CD8-positive, alpha-beta T cell (primary cell): ENCODE measurements at regions of chr20 and their contacts with region 1.

Region 1: GRCh38 chr20:44651684-44652423 is at the start of gene ADA:
- DNase-seq: peak in 8 of 9 experiments; percentile 19 to 75 (median 55)
- ATAC-seq: peak; percentile 66
- H3K4me3 ChIP-seq: peak within 1 kb of the TSS; percentile 87 to 97
- H3K4me3 Mint-ChIP-seq: peak within 1 kb of the TSS; percentile 88
- H3K27ac ChIP-seq: peak within 1 kb of the TSS; percentile 70 to 75
- H3K27ac Mint-ChIP-seq: peak within 1 kb of the TSS; percentile 91
- H3K4me1 ChIP-seq: peaks cover 47% of the 10 kb centered on the region
- H3K4me1 Mint-ChIP-seq: peaks cover 46% of the 10 kb centered on the region
- H3K27me3 ChIP-seq: no peaks in the 10 kb centered on the region
- H3K27me3 Mint-ChIP-seq: no peaks in the 10 kb centered on the region
- CTCF ChIP-seq: no peak
- total RNA-seq, gene ADA: 27.9 to 30.2 TPM

Region 2: DNA sequence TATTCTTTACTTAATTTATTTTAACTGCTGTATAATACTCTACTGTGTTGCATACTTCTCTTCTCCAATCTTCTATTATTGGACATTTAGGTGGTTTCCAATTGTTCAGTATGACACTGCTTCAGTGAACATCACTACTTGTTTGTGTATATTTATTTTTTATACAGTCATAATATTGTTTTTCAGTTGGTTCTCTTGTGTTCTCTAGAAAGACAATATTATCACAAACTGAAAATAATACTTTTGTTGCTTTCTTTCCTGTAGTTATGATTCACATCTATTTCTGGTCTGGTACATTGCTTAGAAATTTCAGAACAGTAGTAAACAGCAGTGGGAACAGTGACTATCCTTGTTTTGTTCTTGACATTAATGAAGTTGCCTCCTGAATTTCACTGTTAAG is 862.3 kb before region 1 on chr20:
- CTCF ChIA-PET with region 1: no interaction called
- POLR2A ChIA-PET with region 1: no interaction called
- intact Hi-C with region 1: no loop called
- DNase-seq: no peak
- ATAC-seq: no peak
- H3K4me3 ChIP-seq: no peak overlapping the region
- H3K4me3 Mint-ChIP-seq: no peak overlapping the region
- H3K27ac ChIP-seq: no peak overlapping the region
- H3K27ac Mint-ChIP-seq: no peak overlapping the region
- H3K4me1 ChIP-seq: no peaks in the 10 kb centered on the region
- H3K4me1 Mint-ChIP-seq: no peaks in the 10 kb centered on the region
- H3K27me3 ChIP-seq: no peaks in the 10 kb centered on the region
- H3K27me3 Mint-ChIP-seq: peaks cover 6% of the 10 kb centered on the region
- CTCF ChIP-seq: no peak

Region 3: GRCh38 chr20:44475694-44476560 is 175.9 kb before region 1 on chr20 and contains the start of gene TTPAL:
- CTCF ChIA-PET with region 1: no interaction called
- POLR2A ChIA-PET with region 1: no interaction called
- intact Hi-C with region 1: loop called in 1 of 2 experiments (anchors 1 kb)
- DNase-seq: peak; percentile 72 to 95 (median 88)
- ATAC-seq: peak; percentile 96
- H3K4me3 ChIP-seq: peak within 1 kb of the TSS; percentile 82 to 90
- H3K4me3 Mint-ChIP-seq: peak within 1 kb of the TSS; percentile 86
- H3K27ac ChIP-seq: peak within 1 kb of the TSS; percentile 94 to 96
- H3K27ac Mint-ChIP-seq: peak within 1 kb of the TSS; percentile 95
- H3K4me1 ChIP-seq: peaks cover 16% of the 10 kb centered on the region
- H3K4me1 Mint-ChIP-seq: peaks cover 27% of the 10 kb centered on the region
- H3K27me3 ChIP-seq: no peaks in the 10 kb centered on the region
- H3K27me3 Mint-ChIP-seq: no peaks in the 10 kb centered on the region
- CTCF ChIP-seq: peak; percentile 26
- total RNA-seq, gene TTPAL: 12.3 TPM

Region 4: GRCh38 chr20:44615169-44615791 is 36.6 kb before region 1 on chr20:
- CTCF ChIA-PET with region 1: interaction called, 27 read pairs
- POLR2A ChIA-PET with region 1: interaction called, 9 read pairs
- intact Hi-C with region 1: loop called in 1 of 2 experiments (anchors 1 kb)
- DNase-seq: peak in 5 of 9 experiments; percentile 22 to 61 (median 31)
- ATAC-seq: no peak
- H3K4me3 ChIP-seq: peak overlapping the region in 1 of 2 experiments; percentile 2
- H3K4me3 Mint-ChIP-seq: peak overlapping the region; percentile 61
- H3K27ac ChIP-seq: peak overlapping the region; percentile 53 to 75
- H3K27ac Mint-ChIP-seq: peak overlapping the region; percentile 98
- H3K4me1 ChIP-seq: peaks cover 82% of the 10 kb centered on the region
- H3K4me1 Mint-ChIP-seq: peaks cover 76% of the 10 kb centered on the region
- H3K27me3 ChIP-seq: no peaks in the 10 kb centered on the region
- H3K27me3 Mint-ChIP-seq: no peaks in the 10 kb centered on the region
- CTCF ChIP-seq: no peak

Region 5: DNA sequence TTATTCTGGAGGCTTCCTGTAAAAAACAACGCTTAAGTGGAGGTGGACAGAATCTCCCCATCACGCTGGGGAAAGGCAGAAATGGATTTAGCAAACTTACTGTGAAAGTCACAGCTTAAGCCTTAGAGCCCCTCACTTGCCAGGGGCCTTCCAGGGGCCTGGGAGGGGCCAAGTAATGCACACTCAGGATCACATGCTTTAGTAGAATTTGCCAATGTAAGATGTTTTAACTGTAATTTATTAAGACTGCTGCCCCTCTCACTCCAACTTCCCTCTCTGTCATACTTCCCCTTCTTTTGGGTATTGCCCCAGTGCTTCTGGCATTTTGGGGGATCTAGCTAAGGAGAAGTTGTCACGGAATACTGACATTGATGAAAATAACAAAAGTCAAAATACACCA is 12.3 kb after region 1 on chr20:
- CTCF ChIA-PET with region 1: interaction called, 4 read pairs
- POLR2A ChIA-PET with region 1: interaction called, 4 read pairs
- intact Hi-C with region 1: loop called in 1 of 2 experiments (anchors 2 kb)
- DNase-seq: no peak
- ATAC-seq: no peak
- H3K4me3 ChIP-seq: no peak overlapping the region
- H3K4me3 Mint-ChIP-seq: no peak overlapping the region
- H3K27ac ChIP-seq: no peak overlapping the region
- H3K27ac Mint-ChIP-seq: no peak overlapping the region
- H3K4me1 ChIP-seq: peaks cover 10% of the 10 kb centered on the region
- H3K4me1 Mint-ChIP-seq: peaks cover 29% of the 10 kb centered on the region
- H3K27me3 ChIP-seq: no peaks in the 10 kb centered on the region
- H3K27me3 Mint-ChIP-seq: no peaks in the 10 kb centered on the region
- CTCF ChIP-seq: no peak